ENCODE measurements at regions of chr4 and their contacts with region 1.

Region 1: GRCh38 chr4:166252487-166253402 is 379.7 kb downstream of the TLL1 start:
- DNase-seq: no peak
- ATAC-seq: no peak

Region 2: GRCh38 chr4:165874791-165875371 is 377.9 kb before region 1 on chr4:
- intact Hi-C with region 1: loop called (anchors 5 kb)
- DNase-seq: peak; percentile 56
- ATAC-seq: peak; percentile 76